Endothelial cell of umbilical vein (primary cell): ENCODE measurements at regions of chr1 and their contacts with region 1.

Region 1: DNA sequence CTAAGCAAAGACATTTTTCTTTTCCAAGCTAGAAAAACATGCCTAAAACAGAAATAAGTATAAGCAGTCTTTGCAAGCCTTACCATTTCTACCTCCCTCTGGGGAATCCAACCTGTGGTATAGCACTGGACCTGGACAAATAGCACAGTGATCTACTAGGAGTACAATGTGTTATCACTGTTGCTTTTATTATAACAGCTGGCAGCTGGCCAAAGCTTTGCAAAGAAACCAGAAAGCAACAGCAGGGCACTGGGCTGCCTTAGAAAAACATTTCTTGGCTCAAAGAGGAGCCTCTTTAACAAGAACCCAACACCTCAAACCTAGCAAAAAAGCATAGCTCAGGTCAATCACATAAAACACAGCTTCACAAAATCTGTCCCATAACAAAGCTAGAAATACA is 294.5 kb upstream of the GREM2 start:
- DNase-seq: peak; percentile 37
- H3K4me3 ChIP-seq: no peak overlapping the region
- H3K27ac ChIP-seq: no peak overlapping the region
- H3K4me1 ChIP-seq: no peaks in the 10 kb centered on the region
- H3K27me3 ChIP-seq: no peaks in the 10 kb centered on the region
- CTCF ChIP-seq: no peak
- POLR2A ChIP-seq: no peak

Region 2: GRCh38 chr1:239434181-239434580 is 1472.3 kb before region 1 on chr1:
- CTCF ChIA-PET with region 1: no interaction called
- POLR2A ChIA-PET with region 1: no interaction called
- dilution Hi-C with region 1: no loop called
- intact Hi-C with region 1: no loop called
- DNase-seq: no peak
- H3K4me3 ChIP-seq: no peak overlapping the region
- H3K27ac ChIP-seq: no peak overlapping the region
- H3K4me1 ChIP-seq: no peaks in the 10 kb centered on the region
- H3K27me3 ChIP-seq: no peaks in the 10 kb centered on the region
- CTCF ChIP-seq: no peak
- POLR2A ChIP-seq: no peak

Region 3: DNA sequence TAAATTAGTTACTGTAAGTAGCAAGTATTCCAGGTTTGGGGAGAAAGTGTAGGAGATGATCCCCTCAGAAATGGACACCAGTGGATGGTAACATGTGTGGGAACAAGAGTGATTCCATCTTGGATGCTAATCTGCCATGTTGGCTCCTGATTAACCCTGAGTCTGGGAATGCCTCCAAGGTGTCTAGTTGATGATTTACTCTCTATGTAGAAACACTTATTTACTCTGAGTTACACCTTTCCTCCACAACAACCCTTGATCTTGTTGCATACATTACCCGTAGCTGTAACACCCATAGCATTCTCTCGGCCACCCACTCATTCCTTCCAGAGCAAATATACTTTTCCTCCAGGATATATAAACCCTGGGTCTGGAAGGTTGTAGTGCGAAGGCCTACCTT is 21.3 kb after region 1 on chr1:
- CTCF ChIA-PET with region 1: interaction called, 3 read pairs
- POLR2A ChIA-PET with region 1: no interaction called
- dilution Hi-C with region 1: no loop called
- intact Hi-C with region 1: loop called (anchors 1 kb)
- DNase-seq: no peak
- H3K4me3 ChIP-seq: no peak overlapping the region
- H3K27ac ChIP-seq: no peak overlapping the region
- H3K4me1 ChIP-seq: no peaks in the 10 kb centered on the region
- H3K27me3 ChIP-seq: no peaks in the 10 kb centered on the region
- CTCF ChIP-seq: no peak
- POLR2A ChIP-seq: no peak